ENCODE measurements at regions of chr22 and their contacts with region 1.

Region 1: GRCh38 chr22:36528795-36529751 is at the start of gene EIF3D:
- DNase-seq: peak; percentile 84
- H3K27ac ChIP-seq: peak within 1 kb of the TSS; percentile 94
- CTCF ChIP-seq: no peak

Region 2: GRCh38 chr22:36467042-36467810 is 61.8 kb before region 1 on chr22:
- CTCF ChIA-PET with region 1: no interaction called
- POLR2A ChIA-PET with region 1: interaction called, 10 read pairs
- DNase-seq: no peak
- H3K27ac ChIP-seq: peak overlapping the region; percentile 96
- CTCF ChIP-seq: no peak

Measured in RWPE1 (cell line).